ENCODE measurements at regions of chrX and their contacts with region 1.

Region 1: DNA sequence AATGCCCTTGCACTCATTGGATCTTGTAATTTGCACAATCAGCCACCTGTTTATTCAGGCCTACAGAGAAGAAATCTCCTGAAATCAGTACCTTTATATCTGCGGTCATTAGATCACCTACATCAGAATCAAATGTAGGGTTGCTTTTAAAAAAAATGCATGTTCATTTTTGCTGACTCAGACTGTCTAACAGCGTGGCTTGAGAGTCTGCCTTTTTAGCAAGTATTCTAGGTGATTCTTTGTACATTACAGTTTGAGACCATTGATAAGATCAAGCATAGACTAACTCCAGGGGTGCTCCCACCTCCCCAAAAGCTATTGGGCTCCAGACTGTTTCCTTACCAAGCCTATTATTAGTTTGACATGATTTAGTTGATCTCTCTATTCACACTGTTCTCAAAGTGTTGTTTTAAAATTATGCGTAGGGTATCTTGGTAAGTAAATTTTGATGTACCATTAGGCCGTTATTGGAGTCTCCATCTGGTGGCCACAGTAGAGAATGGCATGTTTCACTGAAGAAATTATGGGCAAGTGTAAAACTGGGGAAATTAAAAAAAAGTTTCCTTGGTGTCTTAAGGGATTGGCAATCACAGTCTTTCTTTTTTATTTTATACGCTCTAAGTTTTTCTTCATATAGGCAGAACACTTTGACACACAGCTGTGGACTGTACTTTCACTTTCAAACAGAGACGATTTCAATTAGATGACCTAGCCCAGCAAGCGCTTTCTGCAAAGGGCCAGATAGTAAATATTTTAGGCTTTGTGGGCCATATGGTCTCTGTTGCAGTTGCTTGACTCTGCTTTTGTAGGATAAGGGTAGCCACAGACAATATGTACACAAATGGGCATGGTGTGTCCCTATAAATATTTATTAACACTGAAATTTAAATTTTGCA is 33.7 kb upstream of the MSL3 start:
- DNase-seq: peak; percentile 56
- H3K4me3 Mint-ChIP-seq: no peak overlapping the region
- H3K27ac Mint-ChIP-seq: no peak overlapping the region
- H3K4me1 Mint-ChIP-seq: no peaks in the 10 kb centered on the region
- H3K27me3 Mint-ChIP-seq: no peaks in the 10 kb centered on the region

Region 2: DNA sequence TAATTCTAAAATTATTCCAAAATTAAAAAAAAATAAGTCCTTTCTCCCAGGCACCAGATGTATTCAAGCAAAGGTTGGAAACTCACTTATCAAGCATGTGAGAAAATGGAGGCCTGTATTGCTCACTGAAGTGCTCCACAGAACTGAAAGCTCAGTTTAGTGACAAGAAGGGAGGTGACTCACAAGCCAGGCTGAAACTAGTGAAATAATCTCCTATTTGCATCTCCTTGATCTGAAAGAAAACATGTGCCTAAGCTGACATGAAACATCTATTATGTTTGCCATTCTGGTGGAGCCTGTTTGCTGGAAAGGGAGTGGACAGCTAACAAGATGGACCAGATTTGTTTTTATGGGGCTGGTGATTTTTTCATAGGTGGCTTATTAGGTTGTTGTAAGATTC is 485.1 kb before region 1 on chrX:
- intact Hi-C with region 1: no loop called
- DNase-seq: no peak
- H3K4me3 Mint-ChIP-seq: no peak overlapping the region
- H3K27ac Mint-ChIP-seq: no peak overlapping the region
- H3K4me1 Mint-ChIP-seq: no peaks in the 10 kb centered on the region
- H3K27me3 Mint-ChIP-seq: no peaks in the 10 kb centered on the region

Region 3: DNA sequence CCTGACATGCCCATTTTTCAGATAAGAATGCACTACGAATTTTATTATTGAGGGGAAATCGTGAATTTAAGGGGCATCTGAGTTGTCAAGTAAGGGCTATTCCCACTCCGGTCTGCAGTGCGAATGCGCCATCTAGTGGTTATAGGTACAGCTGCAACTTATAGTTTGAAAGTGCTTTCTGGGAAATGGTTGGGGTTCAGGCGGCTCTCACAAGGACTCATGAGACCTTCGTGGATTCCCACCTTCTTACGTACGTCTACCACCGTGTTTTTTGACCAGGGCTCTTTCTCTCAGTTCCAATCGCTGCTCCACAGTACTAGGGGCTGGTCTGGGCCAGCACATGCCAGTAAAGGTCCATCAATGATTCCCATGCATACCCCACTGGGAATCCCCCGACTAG is 46.0 kb after region 1 on chrX:
- intact Hi-C with region 1: loop called (anchors 2 kb)
- DNase-seq: peak; percentile 82
- H3K4me3 Mint-ChIP-seq: peak overlapping the region; percentile 52
- H3K27ac Mint-ChIP-seq: peak overlapping the region; percentile 84
- H3K4me1 Mint-ChIP-seq: peaks cover 23% of the 10 kb centered on the region
- H3K27me3 Mint-ChIP-seq: no peaks in the 10 kb centered on the region